CD4-positive, alpha-beta T cell (primary cell): ENCODE measurements at regions of chr20 and their contacts with region 1.

Region 1: GRCh38 chr20:56247948-56248782 is at the start of gene MC3R:
- DNase-seq: peak in 13 of 14 experiments; percentile 2 to 56 (median 17)
- ATAC-seq: no peak
- H3K4me3 ChIP-seq: no peak within 1 kb of the TSS
- H3K4me3 Mint-ChIP-seq: no peak within 1 kb of the TSS
- H3K27ac ChIP-seq: no peak within 1 kb of the TSS
- H3K27ac Mint-ChIP-seq: no peak within 1 kb of the TSS
- H3K4me1 ChIP-seq: no peaks in the 10 kb centered on the region
- H3K4me1 Mint-ChIP-seq: no peaks in the 10 kb centered on the region
- H3K27me3 ChIP-seq: peaks cover 17 to 18% of the 10 kb centered on the region in 2 experiments
- H3K27me3 Mint-ChIP-seq: peaks cover 72% of the 10 kb centered on the region
- CTCF ChIP-seq: peak; percentile 41
- total RNA-seq, gene MC3R: not detected

Region 2: GRCh38 chr20:56513161-56514150 is 265.3 kb after region 1 on chr20:
- CTCF ChIA-PET with region 1: no interaction called
- POLR2A ChIA-PET with region 1: no interaction called
- intact Hi-C with region 1: loop called in 1 of 2 experiments (anchors 5 kb)
- DNase-seq: no peak
- ATAC-seq: no peak
- H3K4me3 ChIP-seq: no peak overlapping the region
- H3K4me3 Mint-ChIP-seq: no peak overlapping the region
- H3K27ac ChIP-seq: no peak overlapping the region
- H3K27ac Mint-ChIP-seq: no peak overlapping the region
- H3K4me1 ChIP-seq: no peaks in the 10 kb centered on the region
- H3K4me1 Mint-ChIP-seq: no peaks in the 10 kb centered on the region
- H3K27me3 ChIP-seq: no peaks in the 10 kb centered on the region
- H3K27me3 Mint-ChIP-seq: no peaks in the 10 kb centered on the region
- CTCF ChIP-seq: no peak

Region 3: DNA sequence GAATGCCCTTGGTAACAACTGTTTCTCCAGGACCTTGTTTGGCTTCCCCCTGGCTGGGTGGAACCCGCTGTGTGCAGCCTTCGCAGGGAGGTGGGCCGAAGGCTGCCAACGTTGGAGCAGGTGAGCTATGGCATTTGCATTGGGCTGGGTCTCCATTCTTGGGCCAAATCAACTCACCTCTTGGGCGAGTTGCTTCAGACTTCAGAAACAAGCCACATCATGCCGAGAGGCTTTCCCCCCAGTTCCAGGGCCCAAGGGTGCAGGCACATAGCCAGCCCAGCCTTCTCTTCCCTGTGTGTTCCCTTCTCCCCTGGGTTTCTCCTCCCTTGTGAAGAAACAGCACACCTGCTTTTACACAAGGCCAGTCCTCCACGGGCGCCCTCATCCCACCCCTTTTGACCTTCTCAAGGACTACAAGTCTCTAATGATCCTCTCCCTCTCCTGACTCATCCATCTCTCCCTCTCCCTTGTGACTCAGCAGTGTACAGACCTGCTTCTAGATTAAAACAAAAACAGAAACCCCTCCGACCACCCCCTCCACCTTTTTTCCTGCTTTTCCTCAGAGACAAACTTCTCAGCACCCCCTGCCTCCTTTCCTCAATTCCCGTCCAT is 326.5 kb after region 1 on chr20:
- CTCF ChIA-PET with region 1: no interaction called
- POLR2A ChIA-PET with region 1: no interaction called
- intact Hi-C with region 1: loop called in 1 of 2 experiments (anchors 5 kb)
- DNase-seq: no peak
- ATAC-seq: no peak
- H3K4me3 ChIP-seq: no peak overlapping the region
- H3K4me3 Mint-ChIP-seq: no peak overlapping the region
- H3K27ac ChIP-seq: no peak overlapping the region
- H3K27ac Mint-ChIP-seq: no peak overlapping the region
- H3K4me1 ChIP-seq: no peaks in the 10 kb centered on the region
- H3K4me1 Mint-ChIP-seq: no peaks in the 10 kb centered on the region
- H3K27me3 ChIP-seq: no peaks in the 10 kb centered on the region
- H3K27me3 Mint-ChIP-seq: peaks cover 32% of the 10 kb centered on the region
- CTCF ChIP-seq: no peak